Mammary epithelial cell (primary cell): ENCODE measurements at regions of chr3 and their contacts with region 1.

Region 1: GRCh38 chr3:56825567-56826438 is 24.1 kb upstream of the ARHGEF3 start:
- DNase-seq: no peak
- H3K4me3 ChIP-seq: no peak overlapping the region
- H3K27ac ChIP-seq: no peak overlapping the region
- H3K4me1 ChIP-seq: peaks cover 10% of the 10 kb centered on the region
- H3K27me3 ChIP-seq: no peaks in the 10 kb centered on the region
- CTCF ChIP-seq: no peak

Region 2: DNA sequence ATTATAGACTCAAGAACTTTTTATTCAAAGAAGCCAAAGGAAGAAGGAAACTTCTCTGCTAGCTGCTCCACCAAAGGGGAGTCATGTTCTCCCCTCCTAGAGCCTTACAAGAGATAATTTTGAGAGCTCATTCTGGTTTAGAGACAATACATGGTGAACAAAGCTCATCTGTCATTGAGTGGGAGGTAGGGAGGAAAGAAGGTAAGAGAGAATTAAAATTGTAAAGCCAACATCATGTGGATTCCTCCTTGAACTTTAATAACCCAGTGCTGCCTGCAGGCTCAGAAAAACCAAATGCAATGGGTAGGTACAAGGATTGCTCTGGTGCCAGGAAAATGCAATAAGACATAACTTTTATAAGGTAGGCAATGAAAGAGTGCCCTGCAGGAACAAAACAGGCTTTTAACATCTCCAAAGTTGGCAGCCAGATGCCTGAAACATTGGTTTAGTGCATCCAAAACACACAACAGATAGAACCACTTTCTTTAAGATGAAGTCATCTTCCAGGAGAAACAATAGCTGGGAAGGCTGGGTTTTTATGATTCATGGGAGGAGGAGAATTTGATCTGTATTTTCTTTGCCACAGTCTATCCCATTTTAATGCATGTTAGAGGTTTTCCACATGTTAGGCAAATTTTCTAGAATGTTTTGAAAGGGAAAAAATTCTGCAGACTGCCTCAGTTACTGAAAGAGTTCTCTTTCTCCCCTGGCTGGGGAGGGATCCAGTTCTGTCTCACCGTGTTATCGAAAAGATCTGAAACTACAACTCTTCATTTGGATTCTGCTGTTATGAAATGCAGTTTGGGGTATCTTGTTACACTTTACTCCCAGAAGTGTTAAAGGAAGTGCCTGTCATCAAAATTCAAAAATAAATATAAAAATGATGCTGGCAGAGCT is 12.8 kb before region 1 on chr3:
- CTCF ChIA-PET with region 1: no interaction called
- dilution Hi-C with region 1: no loop called
- in situ Hi-C with region 1: no loop called
- intact Hi-C with region 1: no loop called
- DNase-seq: peak; percentile 65
- H3K4me3 ChIP-seq: no peak overlapping the region
- H3K27ac ChIP-seq: peak overlapping the region; percentile 8
- H3K4me1 ChIP-seq: peaks cover 39% of the 10 kb centered on the region
- H3K27me3 ChIP-seq: no peaks in the 10 kb centered on the region
- CTCF ChIP-seq: no peak

Region 3: DNA sequence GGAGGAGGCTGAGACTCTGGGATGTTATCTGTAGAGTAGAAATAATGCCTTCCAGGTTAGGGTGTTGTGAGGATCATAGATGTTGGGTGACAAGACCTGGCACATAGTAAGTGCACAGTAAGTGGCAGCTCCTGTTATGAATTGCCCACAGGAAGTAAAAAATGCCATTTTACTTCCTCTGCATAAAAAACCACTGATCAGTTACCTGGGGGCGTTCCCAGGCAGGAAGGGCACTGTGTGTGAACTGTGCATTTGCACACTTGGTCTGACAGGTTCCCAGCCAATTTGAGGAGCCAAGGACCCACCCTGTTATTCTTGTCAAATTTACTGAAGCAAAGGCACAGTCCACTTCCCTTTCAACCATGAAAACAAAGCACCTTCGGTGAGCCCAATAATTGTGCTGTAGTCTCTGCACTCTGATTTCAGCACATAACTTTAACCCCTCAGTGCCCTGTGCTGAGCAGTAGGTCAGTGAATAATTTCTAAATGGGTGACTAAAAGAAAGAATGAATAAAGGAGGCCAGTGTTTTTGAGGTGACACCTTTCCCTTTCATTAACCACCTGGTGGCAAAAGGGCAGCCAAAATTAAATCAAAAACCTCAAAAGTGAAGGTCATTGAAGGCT is 61.7 kb after region 1 on chr3:
- CTCF ChIA-PET with region 1: no interaction called
- dilution Hi-C with region 1: loop called (anchors 5 kb)
- in situ Hi-C with region 1: no loop called
- intact Hi-C with region 1: no loop called
- DNase-seq: no peak
- H3K4me3 ChIP-seq: no peak overlapping the region
- H3K27ac ChIP-seq: no peak overlapping the region
- H3K4me1 ChIP-seq: peaks cover 25% of the 10 kb centered on the region
- H3K27me3 ChIP-seq: no peaks in the 10 kb centered on the region
- CTCF ChIP-seq: no peak

Region 4: GRCh38 chr3:57152149-57153143 is 326.6 kb after region 1 on chr3:
- CTCF ChIA-PET with region 1: no interaction called
- dilution Hi-C with region 1: no loop called
- in situ Hi-C with region 1: no loop called
- intact Hi-C with region 1: no loop called
- DNase-seq: peak; percentile 26
- H3K4me3 ChIP-seq: peak overlapping the region; percentile 14 to 35 (median 34)
- H3K27ac ChIP-seq: peak overlapping the region; percentile 52
- H3K4me1 ChIP-seq: peaks cover 48% of the 10 kb centered on the region
- H3K27me3 ChIP-seq: no peaks in the 10 kb centered on the region
- CTCF ChIP-seq: peak; percentile 19 to 39